ENCODE measurements at regions of chr13 and their contacts with region 1.

Region 1: DNA sequence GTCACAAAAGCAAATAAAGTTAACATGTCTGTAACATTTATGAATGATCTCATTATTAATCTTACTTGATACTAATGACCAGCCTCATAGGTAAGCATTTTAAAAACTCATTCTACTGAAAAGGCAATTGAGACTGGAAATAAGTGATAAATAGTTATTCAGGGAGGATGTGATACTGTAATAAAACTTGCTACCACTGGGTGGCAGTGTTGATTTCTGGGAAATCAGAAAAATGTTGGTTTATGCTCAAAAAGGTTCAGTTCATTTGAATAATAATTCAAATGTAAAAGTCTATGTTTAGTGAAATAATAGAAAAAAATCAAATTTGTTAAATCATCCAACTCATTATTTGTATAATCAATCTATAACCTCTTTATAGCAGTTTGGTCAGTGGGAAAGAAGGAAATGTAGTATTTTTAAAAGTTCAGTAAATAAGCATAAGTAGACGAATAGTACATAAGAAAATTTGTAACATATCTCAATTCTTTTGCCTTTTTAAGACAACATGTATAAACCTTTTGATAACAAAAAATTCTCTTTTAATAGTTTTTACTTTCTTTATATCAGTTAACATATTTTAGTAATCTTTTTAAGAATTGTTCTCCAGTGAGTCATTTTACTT is 9.6 kb downstream of the ABHD13 start:
- DNase-seq: peak in 6 of 9 donors; percentile 30 to 58 (median 46)
- ATAC-seq: peak; percentile 64
- H3K4me3 ChIP-seq: no peak overlapping the region
- H3K4me3 Mint-ChIP-seq: no peak overlapping the region
- H3K27ac ChIP-seq: no peak overlapping the region
- H3K27ac Mint-ChIP-seq: peak overlapping the region in 1 of 9 donors; percentile 51
- H3K4me1 ChIP-seq: peaks cover 14 to 18% of the 10 kb centered on the region in 2 donors
- H3K4me1 Mint-ChIP-seq: peaks cover 31 to 76% (median 71%) of the 10 kb centered on the region in 7 donors
- H3K27me3 ChIP-seq: no peaks in the 10 kb centered on the region
- H3K27me3 Mint-ChIP-seq: no peaks in the 10 kb centered on the region

Region 2: GRCh38 chr13:108269601-108270328 is 42.0 kb after region 1 on chr13 and contains the start of gene TNFSF13B:
- CTCF ChIA-PET with region 1: no interaction called
- POLR2A ChIA-PET with region 1: interaction called, 3 read pairs
- intact Hi-C with region 1: loop called (anchors 2 kb)
- DNase-seq: peak in 8 of 9 donors; percentile 17 to 62 (median 26)
- ATAC-seq: peak; percentile 74
- H3K4me3 ChIP-seq: peak within 1 kb of the TSS; percentile 65
- H3K4me3 Mint-ChIP-seq: peak within 1 kb of the TSS; percentile 83 to 98 (median 90)
- H3K27ac ChIP-seq: peak within 1 kb of the TSS; percentile 66
- H3K27ac Mint-ChIP-seq: peak within 1 kb of the TSS; percentile 83 to 97 (median 92)
- H3K4me1 ChIP-seq: peaks cover 0 to 7% of the 10 kb centered on the region in 2 donors
- H3K4me1 Mint-ChIP-seq: peaks cover 23 to 68% (median 52%) of the 10 kb centered on the region in 7 donors
- H3K27me3 ChIP-seq: no peaks in the 10 kb centered on the region
- H3K27me3 Mint-ChIP-seq: no peaks in the 10 kb centered on the region
- total RNA-seq, gene TNFSF13B: 3.0 to 26.8 (median 12.8) TPM

Region 3: GRCh38 chr13:108322206-108322824 is 94.6 kb after region 1 on chr13:
- CTCF ChIA-PET with region 1: interaction called, 3 read pairs
- POLR2A ChIA-PET with region 1: no interaction called
- intact Hi-C with region 1: loop called (anchors 1 kb)
- DNase-seq: peak in 7 of 9 donors; percentile 12 to 58 (median 48)
- ATAC-seq: peak; percentile 92
- H3K4me3 ChIP-seq: no peak overlapping the region
- H3K4me3 Mint-ChIP-seq: no peak overlapping the region
- H3K27ac ChIP-seq: no peak overlapping the region
- H3K27ac Mint-ChIP-seq: no peak overlapping the region
- H3K4me1 ChIP-seq: peaks cover 0 to 12% of the 10 kb centered on the region in 2 donors
- H3K4me1 Mint-ChIP-seq: peaks cover 0 to 33% (median 17%) of the 10 kb centered on the region in 7 donors
- H3K27me3 ChIP-seq: no peaks in the 10 kb centered on the region
- H3K27me3 Mint-ChIP-seq: peaks cover 5 to 47% (median 7%) of the 10 kb centered on the region in 5 donors

Region 4: DNA sequence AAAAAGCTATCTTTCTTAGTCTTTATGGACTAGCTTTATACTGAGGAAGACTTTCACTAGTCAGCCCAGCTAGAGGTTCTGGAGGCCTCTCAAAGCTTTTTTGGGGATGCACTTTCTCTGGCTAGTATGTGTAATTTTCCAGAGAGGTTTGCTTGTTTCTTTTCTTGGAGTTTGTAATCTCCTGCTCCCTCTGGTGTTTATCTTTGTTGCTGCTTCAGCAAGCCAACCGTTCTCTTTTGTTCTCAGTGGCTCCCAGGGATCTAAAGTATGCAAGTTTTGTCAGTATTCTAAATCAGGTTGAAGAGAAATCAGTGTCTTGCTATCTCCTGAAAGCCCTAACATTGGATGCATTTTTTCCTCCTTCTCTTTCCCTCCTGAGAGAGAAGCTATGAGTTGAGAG is 280.5 kb after region 1 on chr13:
- CTCF ChIA-PET with region 1: interaction called, 3 read pairs
- POLR2A ChIA-PET with region 1: no interaction called
- intact Hi-C with region 1: loop called (anchors 5 kb)
- DNase-seq: peak in 4 of 9 donors; percentile 9 to 27 (median 13)
- ATAC-seq: no peak
- H3K4me3 ChIP-seq: no peak overlapping the region
- H3K4me3 Mint-ChIP-seq: no peak overlapping the region
- H3K27ac ChIP-seq: no peak overlapping the region
- H3K27ac Mint-ChIP-seq: no peak overlapping the region
- H3K4me1 ChIP-seq: no peaks in the 10 kb centered on the region
- H3K4me1 Mint-ChIP-seq: peaks cover 0 to 5% (median 0%) of the 10 kb centered on the region in 7 donors
- H3K27me3 ChIP-seq: no peaks in the 10 kb centered on the region
- H3K27me3 Mint-ChIP-seq: no peaks in the 10 kb centered on the region

Region 5: GRCh38 chr13:108961542-108962125 is 733.9 kb after region 1 on chr13:
- CTCF ChIA-PET with region 1: no interaction called
- POLR2A ChIA-PET with region 1: no interaction called
- intact Hi-C with region 1: loop called in 1 of 2 experiments (anchors 5 kb)
- DNase-seq: peak in 6 of 9 donors; percentile 11 to 62 (median 51)
- ATAC-seq: peak; percentile 86
- H3K4me3 ChIP-seq: no peak overlapping the region
- H3K4me3 Mint-ChIP-seq: no peak overlapping the region
- H3K27ac ChIP-seq: no peak overlapping the region
- H3K27ac Mint-ChIP-seq: no peak overlapping the region
- H3K4me1 ChIP-seq: no peaks in the 10 kb centered on the region
- H3K4me1 Mint-ChIP-seq: peaks cover 0 to 2% (median 0%) of the 10 kb centered on the region in 7 donors
- H3K27me3 ChIP-seq: no peaks in the 10 kb centered on the region
- H3K27me3 Mint-ChIP-seq: peaks cover 2 to 4% (median 3%) of the 10 kb centered on the region in 5 donors